ENCODE measurements at regions of chr1 and their contacts with region 1.

Region 1: GRCh38 chr1:14626869-14627607 is 28.6 kb downstream of the KAZN start:
- DNase-seq: no peak
- ATAC-seq: peak; percentile 89

Region 2: GRCh38 chr1:14778898-14779865 is 152.1 kb after region 1 on chr1:
- intact Hi-C with region 1: loop called (anchors 10 kb)
- DNase-seq: no peak
- ATAC-seq: no peak

Measured in sciatic nerve (tissue), 2 donors.